GM10248 (cell line): ENCODE measurements at regions of chr20 and their contacts with region 1.

Region 1: GRCh38 chr20:5156675-5157448 is 30.1 kb downstream of the CDS2 start:
- DNase-seq: no peak
- CTCF ChIP-seq: no peak

Region 2: GRCh38 chr20:5168651-5169396 is 12.0 kb after region 1 on chr20:
- CTCF ChIA-PET with region 1: interaction called, 14 read pairs
- POLR2A ChIA-PET with region 1: no interaction called
- DNase-seq: no peak
- CTCF ChIP-seq: no peak

Region 3: DNA sequence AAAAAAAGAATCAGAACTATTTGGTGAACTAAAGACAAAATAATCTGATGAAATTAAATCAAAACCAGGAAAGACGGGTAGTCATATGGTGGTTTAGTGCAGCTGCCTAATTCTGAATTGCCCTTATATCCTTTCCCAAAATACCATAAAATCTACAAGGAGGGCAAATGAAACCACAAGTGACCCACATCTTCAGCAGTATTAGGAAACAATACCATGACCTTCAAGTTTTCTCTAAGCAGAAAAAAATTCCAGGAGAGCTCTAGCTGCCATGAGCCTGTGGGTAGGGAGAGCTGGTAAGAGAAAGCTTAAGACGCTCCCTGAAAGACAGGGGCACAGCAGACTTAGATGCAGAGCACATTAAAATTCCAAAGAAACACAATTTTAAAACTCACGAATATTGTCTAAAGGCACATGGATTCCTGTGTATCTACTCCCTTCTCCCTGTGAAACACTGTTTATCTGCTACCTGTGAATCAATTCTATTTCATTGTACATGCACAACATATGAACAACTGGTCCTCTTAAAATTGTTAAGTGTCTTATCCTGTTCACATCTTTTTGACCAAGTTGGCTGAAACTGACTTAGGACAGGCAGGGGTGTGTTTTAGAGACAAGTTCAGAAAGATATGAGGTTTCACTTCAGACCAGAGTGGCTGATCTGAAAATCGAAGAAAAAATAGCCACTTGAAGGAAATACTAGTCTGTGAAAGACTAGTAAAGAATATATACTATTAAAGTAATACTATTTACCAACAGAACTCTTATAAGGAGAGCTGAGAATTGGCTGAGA is 439.7 kb after region 1 on chr20:
- CTCF ChIA-PET with region 1: no interaction called
- POLR2A ChIA-PET with region 1: no interaction called
- DNase-seq: peak; percentile 35
- CTCF ChIP-seq: no peak